ENCODE measurements at regions of chr1 and their contacts with region 1.

Region 1: GRCh38 chr1:222416001-222416791 is 131.7 kb downstream of the HHIPL2 start:
- DNase-seq: peak; percentile 69
- H3K4me3 Mint-ChIP-seq: no peak overlapping the region
- H3K27ac Mint-ChIP-seq: no peak overlapping the region
- H3K4me1 Mint-ChIP-seq: peaks cover 59% of the 10 kb centered on the region
- H3K27me3 Mint-ChIP-seq: no peaks in the 10 kb centered on the region

Region 2: GRCh38 chr1:222263791-222264190 is 152.4 kb before region 1 on chr1:
- CTCF ChIA-PET with region 1: no interaction called
- intact Hi-C with region 1: loop called (anchors 5 kb)
- DNase-seq: peak; percentile 15
- H3K4me3 Mint-ChIP-seq: no peak overlapping the region
- H3K27ac Mint-ChIP-seq: no peak overlapping the region
- H3K4me1 Mint-ChIP-seq: peaks cover 9% of the 10 kb centered on the region
- H3K27me3 Mint-ChIP-seq: no peaks in the 10 kb centered on the region

Measured in activated naive CD4-positive, alpha-beta T cell treated with anti-CD3 and anti-CD28 coated beads for 36 hours (primary cell).